Body of pancreas (tissue), 4 donors: ENCODE measurements at regions of chr11 and their contacts with region 1.

Region 1: GRCh38 chr11:64652586-64653387 is 61.8 kb downstream of the SLC22A12 start:
- DNase-seq: peak; percentile 78 to 86 (median 80)
- ATAC-seq: peak; percentile 80
- H3K4me3 ChIP-seq: no peak overlapping the region
- H3K27ac ChIP-seq: no peak overlapping the region
- H3K4me1 ChIP-seq: peaks cover 9% of the 10 kb centered on the region
- H3K27me3 ChIP-seq: no peaks in the 10 kb centered on the region
- CTCF ChIP-seq: peak; percentile 76 to 97 (median 87)
- POLR2A ChIP-seq: no peak

Region 2: DNA sequence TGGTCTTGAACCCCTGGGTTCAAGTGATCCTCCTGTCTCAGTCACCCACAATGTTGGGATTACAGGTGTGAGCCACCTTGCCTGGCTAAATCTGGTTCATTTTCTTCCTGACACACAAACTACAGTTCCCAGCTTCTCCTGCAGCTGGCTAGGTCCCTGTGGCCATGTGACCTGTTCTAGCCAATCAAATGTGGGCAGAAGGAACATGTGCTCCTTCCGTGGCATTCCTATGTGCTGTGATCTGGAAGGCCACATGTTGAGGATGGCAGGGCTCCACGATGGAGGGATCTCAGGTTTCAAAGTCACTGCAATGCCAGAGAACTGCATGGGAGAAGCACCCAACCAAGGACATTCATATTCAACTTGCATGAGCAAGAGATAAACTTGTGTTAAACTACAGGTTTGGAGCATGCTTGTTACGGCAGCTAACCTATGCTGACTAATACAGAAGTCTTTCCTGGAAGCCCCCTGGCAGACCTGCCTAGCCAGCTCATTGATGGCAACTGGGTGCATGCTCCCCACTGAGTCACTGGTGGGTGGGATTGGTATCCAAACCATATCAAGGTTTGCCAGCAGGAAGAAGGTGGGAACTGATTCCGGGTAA is 207.8 kb before region 1 on chr11:
- intact Hi-C with region 1: loop called (anchors 5 kb)
- DNase-seq: peak; percentile 17 to 42 (median 35)
- ATAC-seq: no peak
- H3K4me3 ChIP-seq: no peak overlapping the region
- H3K27ac ChIP-seq: no peak overlapping the region
- H3K4me1 ChIP-seq: peaks cover 27% of the 10 kb centered on the region
- H3K27me3 ChIP-seq: no peaks in the 10 kb centered on the region
- CTCF ChIP-seq: no peak
- POLR2A ChIP-seq: no peak

Region 3: DNA sequence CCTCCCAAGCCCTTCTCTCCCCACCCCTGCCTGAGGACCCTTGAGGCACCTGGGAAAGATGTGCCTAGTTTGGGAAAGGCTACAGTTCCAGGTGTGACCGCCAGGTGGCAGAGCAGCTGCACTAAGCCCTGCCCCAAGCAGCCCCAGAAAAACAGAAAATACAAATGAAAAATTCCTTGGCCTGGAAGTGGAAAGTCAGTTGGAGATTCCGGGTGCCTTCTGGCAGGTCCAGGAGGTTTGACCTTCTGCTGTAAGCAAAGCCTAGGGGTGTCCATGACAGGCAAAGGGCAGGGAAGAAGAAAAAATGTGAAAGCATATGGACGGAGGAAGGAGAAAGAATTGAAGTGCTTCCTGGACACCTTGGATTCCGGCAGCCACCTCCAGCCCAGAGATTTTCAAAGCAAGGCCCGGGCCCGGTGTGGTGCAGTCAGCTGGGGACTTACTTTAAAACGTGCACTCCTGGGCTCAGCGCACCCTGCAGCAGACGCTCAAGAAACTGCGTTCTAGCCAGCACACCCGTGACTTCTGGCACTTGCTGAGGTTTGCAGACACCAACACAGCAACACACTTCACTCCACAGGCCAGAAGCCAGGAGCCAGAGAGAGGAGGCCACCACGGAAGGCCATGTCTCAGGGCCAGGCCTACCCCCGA is 99.1 kb before region 1 on chr11:
- intact Hi-C with region 1: loop called (anchors 2 kb)
- DNase-seq: peak; percentile 62 to 79 (median 72)
- ATAC-seq: peak; percentile 71
- H3K4me3 ChIP-seq: no peak overlapping the region
- H3K27ac ChIP-seq: peak overlapping the region in 3 of 4 donors; percentile 9 to 57 (median 20)
- H3K4me1 ChIP-seq: peaks cover 28% of the 10 kb centered on the region
- H3K27me3 ChIP-seq: no peaks in the 10 kb centered on the region
- CTCF ChIP-seq: peak; percentile 83 to 98 (median 91)
- POLR2A ChIP-seq: no peak

Region 4: DNA sequence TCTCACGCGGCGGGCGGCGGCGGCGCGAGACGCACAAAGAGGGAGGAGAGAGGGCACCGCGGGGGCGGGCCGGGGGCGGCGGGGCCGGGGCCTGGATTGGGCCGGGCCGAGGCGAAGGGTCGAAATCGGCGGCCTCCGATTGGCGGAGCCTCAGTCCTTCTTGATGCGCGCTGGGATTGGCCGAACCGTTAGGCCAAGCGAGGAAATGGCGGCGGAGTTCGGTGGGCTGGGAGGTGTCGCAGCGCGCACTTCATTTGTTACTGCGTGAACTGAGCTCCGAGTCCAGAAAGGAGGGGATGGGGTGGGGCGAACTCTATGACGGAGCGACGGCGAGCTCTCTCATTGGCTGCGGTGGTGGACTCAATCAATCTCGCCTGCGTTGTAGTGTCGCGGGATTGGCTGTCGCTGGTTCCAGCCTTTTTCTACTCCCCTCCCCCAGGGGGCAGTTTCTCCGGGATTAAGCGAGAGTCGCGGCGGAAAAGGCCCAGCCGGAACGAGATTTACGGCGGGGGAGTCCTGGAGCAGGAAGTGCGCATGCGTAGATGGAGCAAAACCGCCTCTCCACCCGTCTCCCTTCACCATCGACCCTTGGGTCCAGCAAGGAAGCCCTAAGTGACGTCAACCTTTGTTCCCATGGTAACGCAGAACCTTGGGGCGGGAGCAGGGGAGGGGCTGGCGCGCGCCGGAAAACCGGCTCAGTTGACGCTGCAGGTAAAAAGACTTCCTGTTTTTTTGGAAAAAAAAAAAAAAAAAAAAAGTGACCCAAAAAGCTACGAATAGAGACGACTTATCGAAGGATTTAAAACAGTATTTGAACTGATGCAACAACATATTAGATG is 125.9 kb after region 1 on chr11 and contains the start of gene SF1:
- intact Hi-C with region 1: no loop called
- DNase-seq: peak; percentile 98 to 100 (median 98)
- ATAC-seq: peak; percentile 88
- H3K4me3 ChIP-seq: peak within 1 kb of the TSS; percentile 80 to 91
- H3K27ac ChIP-seq: peak within 1 kb of the TSS; percentile 96 to 100 (median 98)
- H3K4me1 ChIP-seq: peaks cover 33% of the 10 kb centered on the region
- H3K27me3 ChIP-seq: no peaks in the 10 kb centered on the region
- CTCF ChIP-seq: peak in 2 of 7 experiments; percentile 36 to 43
- POLR2A ChIP-seq: peak; percentile 98 to 99 (median 99)
- total RNA-seq, gene SF1: 150 to 470 TPM